Heart left ventricle (tissue), 16 donors: ENCODE measurements at regions of chr19 and their contacts with region 1.

Region 1: GRCh38 chr19:16197622-16198369 is at the start of gene AP1M1:
- DNase-seq: peak; percentile 97 to 99 (median 99)
- ATAC-seq: peak; percentile 94 to 99 (median 96)
- H3K4me3 ChIP-seq: peak within 1 kb of the TSS; percentile 78 to 100 (median 96)
- H3K27ac ChIP-seq: peak within 1 kb of the TSS; percentile 60 to 95 (median 88)
- H3K4me1 ChIP-seq: peaks cover 4 to 36% (median 22%) of the 10 kb centered on the region in 12 donors
- H3K27me3 ChIP-seq: no peaks in the 10 kb centered on the region
- CTCF ChIP-seq: no peak
- POLR2A ChIP-seq: peak in 1 of 2 donors; percentile 53
- total RNA-seq, gene AP1M1: 39.3 to 83.8 (median 47.8) TPM

Region 2: GRCh38 chr19:15195371-15196334 is 1002.1 kb before region 1 on chr19:
- intact Hi-C with region 1: loop called in 1 of 10 experiments (anchors 10 kb)
- DNase-seq: peak; percentile 48 to 78 (median 70)
- ATAC-seq: peak; percentile 37 to 66 (median 54)
- H3K4me3 ChIP-seq: peak overlapping the region in 11 of 12 donors; percentile 9 to 70 (median 53)
- H3K27ac ChIP-seq: peak overlapping the region; percentile 18 to 91 (median 52)
- H3K4me1 ChIP-seq: peaks cover 0 to 47% (median 13%) of the 10 kb centered on the region in 12 donors
- H3K27me3 ChIP-seq: peaks cover 9 to 63% (median 36%) of the 10 kb centered on the region in 9 donors
- CTCF ChIP-seq: peak in 6 of 12 donors; percentile 9 to 31 (median 22)
- POLR2A ChIP-seq: no peak

Region 3: DNA sequence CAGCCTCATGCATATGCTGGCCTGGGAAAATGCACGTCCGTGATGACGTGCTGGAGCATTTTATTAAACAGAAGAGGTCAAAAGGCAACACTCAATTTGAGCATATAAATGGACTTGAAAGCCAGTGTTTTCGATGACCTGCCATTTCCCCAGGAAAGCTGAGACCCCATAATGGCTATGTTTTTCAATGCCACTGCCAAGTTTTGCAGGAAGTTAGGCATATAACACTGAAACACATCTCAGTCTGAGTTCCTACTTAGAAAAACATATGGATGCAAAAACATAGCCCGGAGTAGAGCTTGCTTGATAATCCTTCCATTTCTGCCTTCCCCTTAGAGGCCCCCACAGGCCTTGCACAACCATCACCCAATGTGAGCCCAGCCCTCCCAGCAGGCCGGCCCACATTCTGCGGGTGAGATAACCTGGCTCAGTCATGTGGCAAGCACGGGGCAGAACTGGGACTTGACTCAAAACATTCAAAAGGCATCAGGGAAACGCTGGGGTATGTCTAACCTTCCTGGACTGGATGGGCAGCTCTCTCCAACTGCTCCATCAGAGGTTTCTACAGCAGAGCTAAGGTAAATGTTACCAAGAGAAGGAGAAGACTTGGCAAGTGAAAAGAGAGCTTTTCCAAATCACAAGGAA is 249.1 kb after region 1 on chr19:
- intact Hi-C with region 1: no loop called
- DNase-seq: peak; percentile 78 to 90 (median 82)
- ATAC-seq: peak; percentile 89 to 95 (median 92)
- H3K4me3 ChIP-seq: no peak overlapping the region
- H3K27ac ChIP-seq: peak overlapping the region; percentile 58 to 89 (median 74)
- H3K4me1 ChIP-seq: peaks cover 15 to 84% (median 60%) of the 10 kb centered on the region in 12 donors
- H3K27me3 ChIP-seq: no peaks in the 10 kb centered on the region
- CTCF ChIP-seq: no peak
- POLR2A ChIP-seq: peak in 1 of 2 donors; percentile 60

Region 4: GRCh38 chr19:16969127-16969526 is 771.3 kb after region 1 on chr19:
- intact Hi-C with region 1: no loop called
- DNase-seq: no peak
- ATAC-seq: no peak
- H3K4me3 ChIP-seq: no peak overlapping the region
- H3K27ac ChIP-seq: no peak overlapping the region
- H3K4me1 ChIP-seq: no peaks in the 10 kb centered on the region
- H3K27me3 ChIP-seq: no peaks in the 10 kb centered on the region
- CTCF ChIP-seq: no peak
- POLR2A ChIP-seq: no peak